Posterior vena cava (tissue), 2 donors: ENCODE measurements at regions of chr20 and their contacts with region 1.

Region 1: DNA sequence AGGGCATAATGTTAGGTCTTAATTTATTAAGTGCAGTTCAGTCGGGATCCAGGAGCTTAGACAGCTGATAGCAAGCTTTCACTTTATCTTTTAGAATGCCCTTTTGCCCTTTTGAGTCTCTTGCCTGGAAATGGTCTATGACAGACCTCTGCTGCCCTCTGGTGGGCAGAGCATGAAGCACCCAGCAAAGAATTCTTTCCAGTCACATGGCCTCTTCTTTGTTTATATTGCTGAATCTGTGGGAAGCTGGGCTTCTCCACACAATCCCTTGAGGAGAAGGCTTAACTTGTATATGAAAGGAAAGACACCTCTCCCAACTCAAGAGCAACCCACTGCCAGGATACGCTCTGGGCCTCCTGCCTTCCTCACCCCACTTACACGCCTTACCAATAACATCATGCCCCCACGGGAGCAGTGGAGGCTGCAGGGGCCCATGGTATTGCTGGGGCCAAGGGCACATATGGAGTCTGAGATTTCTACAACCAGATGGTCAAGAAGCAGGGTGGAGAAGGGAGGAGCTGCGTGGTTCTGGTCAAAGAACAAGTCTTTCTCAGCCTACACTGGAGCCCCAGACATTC is 20.4 kb downstream of the WFDC3 start:
- DNase-seq: peak; percentile 91

Region 2: GRCh38 chr20:45311589-45312211 is 459.6 kb before region 1 on chr20:
- intact Hi-C with region 1: loop called (anchors 5 kb)
- DNase-seq: peak; percentile 89

Region 3: DNA sequence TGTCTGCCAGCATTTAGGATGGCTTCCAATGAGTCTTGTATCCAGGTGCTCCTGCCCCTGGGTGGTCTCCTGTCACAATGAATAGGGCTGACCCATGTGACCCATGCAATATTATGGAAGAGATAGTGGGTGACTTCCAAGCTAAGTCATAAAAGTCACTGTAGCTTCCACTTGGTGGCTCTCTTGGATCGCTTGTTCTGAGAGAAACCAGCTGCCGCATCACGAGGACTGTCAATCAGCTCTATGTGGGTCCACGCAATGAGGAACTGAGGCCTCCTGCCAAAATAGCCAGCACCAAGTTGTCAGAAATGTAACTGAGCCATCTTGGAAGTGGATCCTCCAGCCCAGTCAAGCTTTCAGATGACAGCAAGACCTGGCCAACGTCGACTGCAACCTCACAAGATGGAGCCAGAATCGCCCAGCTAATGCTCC is 448.3 kb before region 1 on chr20:
- intact Hi-C with region 1: loop called in 1 of 2 experiments (anchors 5 kb)
- DNase-seq: no peak

Region 4: DNA sequence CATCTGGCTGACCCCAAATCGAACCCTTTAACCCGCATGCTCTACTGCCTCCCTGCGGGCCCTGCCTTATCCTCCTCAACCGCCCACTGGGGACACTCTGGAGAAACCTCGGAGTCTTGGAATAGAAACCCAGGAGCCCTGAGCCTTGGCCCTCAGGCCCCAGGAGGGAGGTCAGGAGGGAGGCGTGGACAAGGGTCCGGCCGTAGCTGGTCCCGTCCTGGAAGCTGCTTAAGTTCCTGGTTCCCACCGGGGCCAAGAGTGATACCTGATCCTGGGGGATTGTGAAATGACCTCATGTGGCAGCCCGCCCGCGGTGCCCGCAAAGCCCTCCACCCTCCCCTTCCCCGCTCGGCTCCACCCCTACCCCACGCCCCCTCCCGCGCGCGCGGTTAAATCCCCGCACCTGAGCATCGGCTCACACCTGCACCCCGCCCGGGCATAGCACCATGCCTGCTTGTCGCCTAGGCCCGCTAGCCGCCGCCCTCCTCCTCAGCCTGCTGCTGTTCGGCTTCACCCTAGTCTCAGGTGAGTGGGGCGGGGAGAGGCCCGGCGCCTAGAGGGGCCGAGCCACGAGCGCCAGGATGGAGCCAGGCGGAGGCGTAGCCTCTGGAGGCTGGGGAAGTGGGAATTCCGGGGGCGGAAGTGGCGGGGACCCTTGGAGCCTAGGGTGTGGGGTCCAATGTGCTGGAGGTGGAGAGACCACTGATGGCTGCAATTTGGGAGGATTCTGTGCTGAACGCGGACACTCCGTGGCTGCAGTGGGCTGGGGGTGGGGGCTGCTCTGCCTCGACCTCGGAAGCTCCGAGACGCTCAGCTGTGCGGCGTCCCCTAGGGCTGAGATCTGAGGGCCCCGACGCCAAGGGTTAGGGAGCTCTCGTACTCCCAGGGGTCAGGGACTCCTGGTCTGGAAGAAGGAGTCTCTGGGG is 301.7 kb before region 1 on chr20 and contains the start of gene WFDC2:
- intact Hi-C with region 1: loop called in 1 of 2 experiments (anchors 10 kb)
- DNase-seq: no peak
- total RNA-seq, gene WFDC2: 38.0 to 57.7 TPM

Region 5: DNA sequence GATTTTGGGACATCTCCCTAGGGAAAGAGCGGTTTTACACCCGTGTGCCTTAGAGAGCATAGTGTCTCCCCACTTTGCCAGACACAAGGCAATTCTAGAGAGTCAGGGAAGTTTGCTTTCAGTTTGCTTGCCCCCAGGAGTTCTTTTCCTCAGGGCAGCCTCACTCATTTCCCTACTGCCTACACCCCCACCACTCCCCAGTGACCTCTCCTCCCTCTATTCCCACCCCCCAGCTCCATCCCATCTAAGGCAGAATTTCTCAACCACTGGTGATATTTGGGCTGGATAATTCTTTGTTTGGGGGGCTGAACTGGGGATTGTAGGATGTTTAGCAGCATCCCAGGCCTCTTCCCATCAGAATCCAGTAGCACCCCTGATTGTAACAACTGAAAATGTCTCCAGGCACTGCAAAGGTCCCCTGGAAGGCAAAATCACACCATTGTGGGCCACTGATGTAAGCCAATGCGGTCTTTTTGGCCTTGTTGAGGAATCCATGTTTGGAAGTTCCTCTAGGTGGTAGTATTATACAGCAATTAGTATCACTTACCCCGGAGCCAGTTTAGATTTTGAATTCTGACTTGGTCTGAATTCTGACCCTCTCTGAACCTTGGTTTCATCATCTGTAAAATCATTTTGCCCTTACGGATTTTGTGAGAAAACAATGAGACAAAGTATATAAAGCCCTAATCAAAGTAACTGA is 225.4 kb before region 1 on chr20:
- intact Hi-C with region 1: loop called in 1 of 2 experiments (anchors 10 kb)
- DNase-seq: no peak